Uterus (tissue), 4 donors: ENCODE measurements at regions of chr11 and their contacts with region 1.

Region 1: GRCh38 chr11:83193315-83194280 is at the start of gene ANKRD42:
- DNase-seq: peak; percentile 90 to 94
- H3K4me3 ChIP-seq: peak within 1 kb of the TSS; percentile 68 to 82
- H3K27ac ChIP-seq: peak within 1 kb of the TSS; percentile 87 to 88
- H3K4me1 ChIP-seq: peaks cover 0 to 7% of the 10 kb centered on the region in 2 donors
- H3K27me3 ChIP-seq: no peaks in the 10 kb centered on the region
- CTCF ChIP-seq: peak in 1 of 4 experiments; percentile 30
- POLR2A ChIP-seq: peak; percentile 71 to 82
- total RNA-seq, gene ANKRD42: 3.3 to 21.7 (median 9.0) TPM

Region 2: DNA sequence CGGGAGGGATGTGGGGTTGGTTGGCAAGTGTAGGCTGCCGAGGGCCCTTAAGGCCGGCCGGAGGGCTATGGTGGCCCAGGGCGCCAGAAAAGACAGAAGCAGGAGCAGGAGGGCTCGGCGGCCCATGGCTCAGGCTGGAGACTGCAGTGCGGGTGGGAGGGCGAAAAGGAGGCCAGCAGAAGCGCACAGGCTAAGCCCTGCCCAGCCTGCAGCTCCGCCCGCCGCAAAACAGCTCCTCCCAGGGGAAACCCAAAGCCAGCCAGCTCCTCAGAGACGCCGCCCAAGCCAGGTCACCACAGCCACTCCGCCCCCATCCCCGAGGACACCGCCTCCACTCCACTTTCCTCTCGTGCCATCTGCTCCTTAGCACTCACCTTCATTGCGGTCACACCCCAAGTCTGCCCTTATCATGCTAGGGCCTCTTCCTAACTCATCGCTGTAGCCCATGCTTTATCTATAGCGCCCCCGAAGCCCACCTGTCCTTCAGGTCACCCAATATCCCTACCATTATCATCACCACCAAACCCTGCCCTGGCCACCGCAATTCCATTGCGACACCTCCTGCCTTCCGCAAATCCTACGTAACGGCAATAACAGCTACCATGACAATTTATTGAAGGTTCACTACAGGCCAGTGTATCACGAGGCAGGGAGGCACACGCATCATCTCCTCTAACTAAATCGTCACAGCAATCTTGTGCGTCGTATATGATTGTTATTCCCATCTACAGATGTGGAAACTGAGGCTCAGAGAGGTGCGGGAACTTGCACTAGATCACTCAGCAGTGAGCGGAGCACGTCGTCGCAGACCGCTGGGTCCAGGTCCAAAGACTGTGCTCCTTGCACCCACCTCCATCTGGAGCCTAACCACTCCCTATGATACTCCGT is 293.1 kb before region 1 on chr11 and contains the start of gene PRCP:
- intact Hi-C with region 1: loop called (anchors 10 kb)
- DNase-seq: peak; percentile 92 to 94
- H3K4me3 ChIP-seq: peak within 1 kb of the TSS; percentile 67 to 75
- H3K27ac ChIP-seq: peak within 1 kb of the TSS; percentile 95 to 96
- H3K4me1 ChIP-seq: peaks cover 0 to 3% of the 10 kb centered on the region in 2 donors
- H3K27me3 ChIP-seq: no peaks in the 10 kb centered on the region
- CTCF ChIP-seq: no peak
- POLR2A ChIP-seq: peak; percentile 80 to 88
- total RNA-seq, gene PRCP: 59.9 to 206 (median 92.3) TPM

Region 3: GRCh38 chr11:83071567-83072349 is 121.8 kb before region 1 on chr11 and contains the start of gene RAB30:
- intact Hi-C with region 1: loop called (anchors 5 kb)
- DNase-seq: peak; percentile 95 to 100
- H3K4me3 ChIP-seq: peak within 1 kb of the TSS; percentile 69 to 78
- H3K27ac ChIP-seq: peak within 1 kb of the TSS; percentile 94 to 97
- H3K4me1 ChIP-seq: peaks cover 6 to 15% of the 10 kb centered on the region in 2 donors
- H3K27me3 ChIP-seq: no peaks in the 10 kb centered on the region
- CTCF ChIP-seq: no peak
- POLR2A ChIP-seq: peak; percentile 92 to 94
- total RNA-seq, gene RAB30: 12.4 to 113 (median 48.4) TPM

Region 4: DNA sequence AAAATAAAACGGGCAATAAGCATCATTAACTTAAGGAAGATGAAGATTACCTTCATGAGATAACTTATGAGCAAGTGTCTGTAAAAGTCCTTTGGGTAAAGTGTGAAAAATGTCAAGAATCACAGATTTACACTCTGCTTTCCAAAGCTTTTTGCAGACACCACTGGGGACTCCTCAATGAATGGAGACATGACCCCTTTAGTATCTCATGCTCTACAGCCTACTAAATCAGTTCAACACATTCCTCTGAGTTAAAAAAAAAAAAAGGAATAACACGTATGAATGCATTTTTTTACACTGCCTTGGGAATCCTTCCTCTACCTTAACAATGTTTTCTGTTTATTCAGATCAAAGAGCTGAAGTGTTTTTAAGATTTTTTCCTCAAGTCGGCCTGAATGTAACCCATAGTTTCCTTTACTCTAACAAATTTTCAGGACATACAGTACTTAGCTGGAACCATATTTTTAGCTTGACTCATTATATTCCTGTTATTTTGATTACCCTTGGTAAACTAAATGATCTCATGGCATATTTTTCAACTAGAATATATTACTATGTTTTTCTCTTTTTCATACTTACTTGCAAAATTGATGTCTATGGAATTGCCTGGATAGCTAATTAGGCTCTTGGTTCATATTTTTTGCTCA is 96.0 kb before region 1 on chr11:
- intact Hi-C with region 1: no loop called
- DNase-seq: no peak
- H3K4me3 ChIP-seq: no peak overlapping the region
- H3K27ac ChIP-seq: no peak overlapping the region
- H3K4me1 ChIP-seq: no peaks in the 10 kb centered on the region
- H3K27me3 ChIP-seq: no peaks in the 10 kb centered on the region
- CTCF ChIP-seq: no peak
- POLR2A ChIP-seq: no peak

Region 5: DNA sequence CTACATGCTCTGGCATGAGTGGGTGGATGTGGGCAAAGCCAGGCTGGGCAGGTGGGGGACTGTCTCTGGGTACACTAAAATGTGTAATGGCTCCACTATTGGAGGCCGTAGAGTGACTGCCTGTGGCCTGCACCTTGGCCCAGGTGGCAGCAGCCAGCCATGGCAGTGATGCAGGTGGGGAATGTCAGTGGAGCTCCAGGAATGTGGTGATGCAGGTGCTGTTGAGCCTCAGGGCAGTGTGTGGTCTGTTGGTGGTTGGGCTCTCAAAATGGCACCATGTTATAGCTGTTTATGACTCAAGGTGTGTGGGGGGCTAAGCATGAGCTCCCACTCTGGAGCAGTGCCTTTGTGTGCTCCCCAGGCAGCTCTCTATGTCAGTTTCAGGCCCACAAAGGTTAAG is 132.7 kb after region 1 on chr11:
- intact Hi-C with region 1: no loop called
- DNase-seq: no peak
- H3K4me3 ChIP-seq: no peak overlapping the region
- H3K27ac ChIP-seq: no peak overlapping the region
- H3K4me1 ChIP-seq: no peaks in the 10 kb centered on the region
- H3K27me3 ChIP-seq: no peaks in the 10 kb centered on the region
- CTCF ChIP-seq: no peak
- POLR2A ChIP-seq: no peak